H1 (cell line): ENCODE measurements at regions of chr12 and their contacts with region 1.

Region 1: GRCh38 chr12:1583421-1584078 is 10.8 kb downstream of the FBXL14 start:
- DNase-seq: peak in 1 of 2 experiments; percentile 64
- H3K4me3 ChIP-seq: no peak overlapping the region
- H3K27ac ChIP-seq: no peak overlapping the region
- H3K4me1 ChIP-seq: peaks cover 0 to 8% (median 2%) of the 10 kb centered on the region in 4 experiments; a peak in 4 of 7 replicates
- H3K27me3 ChIP-seq: peaks cover 6 to 51% (median 33%) of the 10 kb centered on the region in 4 experiments
- CTCF ChIP-seq: peak; percentile 71 to 94 (median 86)
- EP300 ChIP-seq: no peak
- POLR2A ChIP-seq: no peak
- RAD21 ChIP-seq: peak; percentile 98 to 99

Region 2: DNA sequence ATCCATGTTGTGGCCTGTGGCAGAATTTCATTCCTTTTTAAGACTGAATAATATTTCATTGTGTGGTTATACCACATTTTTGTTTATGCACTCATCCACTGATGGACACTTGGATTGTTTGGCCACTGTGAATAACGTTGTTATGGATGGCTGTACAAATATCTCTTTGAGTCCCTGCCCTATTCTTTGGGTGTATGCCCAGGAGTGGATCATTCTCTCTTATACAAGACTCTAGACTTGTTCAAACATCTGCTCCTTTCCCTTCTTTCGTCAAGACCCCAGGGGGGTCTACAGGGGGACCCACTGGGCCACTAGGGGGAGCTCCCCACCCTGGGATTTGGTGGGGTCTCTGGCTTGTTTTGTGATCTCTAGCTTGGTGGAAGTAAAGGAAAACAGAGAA is 66.5 kb before region 1 on chr12:
- CTCF ChIA-PET with region 1: interaction called, 88 read pairs
- POLR2A ChIA-PET with region 1: no interaction called
- DNase-seq: peak in 1 of 2 experiments; percentile 90
- H3K4me3 ChIP-seq: no peak overlapping the region
- H3K27ac ChIP-seq: no peak overlapping the region
- H3K4me1 ChIP-seq: no peaks in the 10 kb centered on the region; a peak in 2 of 7 replicates
- H3K27me3 ChIP-seq: no peaks in the 10 kb centered on the region
- CTCF ChIP-seq: peak; percentile 75 to 88 (median 79)
- EP300 ChIP-seq: no peak
- POLR2A ChIP-seq: no peak
- RAD21 ChIP-seq: peak; percentile 85 to 95

Region 3: DNA sequence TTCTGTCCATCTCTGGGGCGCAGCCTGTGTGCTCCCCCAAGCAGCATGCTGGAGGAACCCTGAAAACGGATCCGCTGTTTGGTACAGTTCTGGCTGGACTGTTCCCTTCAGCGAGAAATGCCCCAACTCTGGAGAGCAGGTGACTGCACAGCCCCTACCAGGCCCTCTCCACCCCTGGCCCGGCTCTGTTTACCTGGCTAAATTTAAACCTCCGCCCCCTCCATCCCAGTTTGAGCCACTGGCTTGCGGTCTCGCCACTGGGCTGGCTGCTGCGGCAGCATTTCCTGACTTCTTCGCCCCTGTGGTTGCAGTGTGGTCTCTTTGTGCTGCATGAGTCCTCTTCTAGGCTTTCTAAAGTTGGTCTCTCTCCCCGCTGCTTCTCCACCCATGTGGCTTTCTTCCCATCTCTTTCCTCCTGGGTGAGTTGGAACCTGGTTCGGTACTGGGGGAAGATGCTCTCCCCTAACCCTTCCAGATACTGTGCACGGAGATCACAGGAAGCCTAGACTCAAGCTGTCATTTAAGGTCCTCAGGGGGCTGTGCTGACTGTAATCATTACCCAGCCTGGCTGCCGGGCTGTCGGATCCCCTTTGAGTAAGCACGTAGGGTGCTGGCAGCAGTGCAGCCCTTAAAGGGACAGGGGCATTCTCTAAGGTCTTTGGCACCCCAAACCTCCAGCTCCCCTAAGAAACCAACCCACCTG is 49.8 kb before region 1 on chr12:
- CTCF ChIA-PET with region 1: interaction called, 10 read pairs
- POLR2A ChIA-PET with region 1: no interaction called
- DNase-seq: no peak
- H3K4me3 ChIP-seq: no peak overlapping the region
- H3K27ac ChIP-seq: no peak overlapping the region
- H3K4me1 ChIP-seq: peaks cover 0 to 5% (median 4%) of the 10 kb centered on the region in 4 experiments; a peak in 5 of 7 replicates
- H3K27me3 ChIP-seq: peaks cover 45 to 71% (median 56%) of the 10 kb centered on the region in 4 experiments
- CTCF ChIP-seq: no peak
- EP300 ChIP-seq: no peak
- POLR2A ChIP-seq: no peak
- RAD21 ChIP-seq: no peak

Region 4: DNA sequence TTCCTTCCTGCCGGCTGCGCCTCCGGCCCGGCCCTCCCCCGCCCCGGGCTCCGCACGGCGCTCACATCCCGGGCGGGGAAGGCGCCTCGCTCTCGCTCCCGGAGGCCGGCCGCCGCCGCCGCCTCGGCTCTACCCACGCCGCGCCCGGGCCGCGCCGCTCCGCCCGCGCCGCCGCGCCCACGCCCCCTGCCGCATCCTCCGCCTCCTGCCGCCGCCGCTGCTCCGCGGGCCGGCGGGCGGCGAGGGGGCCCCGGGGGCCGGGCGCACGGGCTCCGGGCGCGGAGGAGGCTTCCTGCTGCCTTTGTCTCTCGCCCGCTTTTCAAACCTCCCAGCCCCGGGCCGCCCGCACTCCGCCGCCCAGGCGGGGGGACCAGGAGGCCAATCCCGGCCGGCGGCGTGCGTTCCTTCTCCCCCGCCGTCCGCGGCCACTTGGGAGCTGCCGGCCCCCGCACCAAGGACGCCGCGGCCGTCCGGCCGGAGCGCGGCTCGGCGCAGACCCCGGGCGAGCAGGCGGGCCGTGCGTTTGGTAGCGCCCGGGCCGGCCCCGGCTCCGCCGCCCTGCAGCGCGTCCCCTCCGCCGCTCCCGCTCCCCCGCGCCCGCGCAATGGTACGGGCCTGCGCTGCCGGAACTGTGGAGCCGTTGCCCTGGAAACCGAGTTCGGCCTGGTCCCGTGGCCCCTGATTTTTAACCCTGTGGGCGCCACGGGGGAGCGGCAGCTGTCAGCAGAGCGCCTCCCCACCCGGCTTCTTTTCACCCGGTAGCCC is 10.9 kb after region 1 on chr12 and contains the start of gene FBXL14:
- CTCF ChIA-PET with region 1: interaction called, 4 read pairs
- POLR2A ChIA-PET with region 1: interaction called, 14 read pairs
- DNase-seq: peak in 1 of 2 experiments; percentile 92
- H3K4me3 ChIP-seq: peak within 1 kb of the TSS; percentile 64 to 71 (median 66)
- H3K27ac ChIP-seq: peak within 1 kb of the TSS; percentile 34; the same call in 1 of the 2 replicates
- H3K4me1 ChIP-seq: peaks cover 14 to 34% (median 21%) of the 10 kb centered on the region in 4 experiments
- H3K27me3 ChIP-seq: peaks cover 21 to 61% (median 50%) of the 10 kb centered on the region in 4 experiments
- CTCF ChIP-seq: peak in 1 of 3 experiments; percentile 5; a peak in 1 of 4 replicates
- EP300 ChIP-seq: peak in 1 of 2 experiments; percentile 86; a peak in 1 of 3 replicates
- POLR2A ChIP-seq: peak in 1 of 2 experiments; percentile 28; a peak in 1 of 3 replicates
- RAD21 ChIP-seq: no peak
- total RNA-seq, gene FBXL14: 5.5 and 6.2 TPM in 2 replicates

Region 5: GRCh38 chr12:1706633-1706981 is 123.1 kb after region 1 on chr12:
- CTCF ChIA-PET with region 1: no interaction called
- POLR2A ChIA-PET with region 1: no interaction called
- DNase-seq: no peak
- H3K4me3 ChIP-seq: no peak overlapping the region
- H3K27ac ChIP-seq: no peak overlapping the region
- H3K4me1 ChIP-seq: no peaks in the 10 kb centered on the region
- H3K27me3 ChIP-seq: no peaks in the 10 kb centered on the region
- CTCF ChIP-seq: no peak
- EP300 ChIP-seq: no peak
- POLR2A ChIP-seq: no peak
- RAD21 ChIP-seq: no peak